ENCODE measurements at regions of chr5 and their contacts with region 1.

Region 1: GRCh38 chr5:140564196-140565023 is at the starts of genes APBB3 and SLC35A4:
- DNase-seq: peak; percentile 97
- H3K4me3 Mint-ChIP-seq: peak within 1 kb of the TSS; percentile 96
- H3K27ac Mint-ChIP-seq: peak within 1 kb of the TSS; percentile 93
- H3K4me1 Mint-ChIP-seq: peaks cover 53% of the 10 kb centered on the region
- H3K27me3 Mint-ChIP-seq: no peaks in the 10 kb centered on the region
- total RNA-seq, gene APBB3: 15.4 to 16.5 TPM
- total RNA-seq, gene SLC35A4: 57.1 to 60.1 TPM

Region 2: DNA sequence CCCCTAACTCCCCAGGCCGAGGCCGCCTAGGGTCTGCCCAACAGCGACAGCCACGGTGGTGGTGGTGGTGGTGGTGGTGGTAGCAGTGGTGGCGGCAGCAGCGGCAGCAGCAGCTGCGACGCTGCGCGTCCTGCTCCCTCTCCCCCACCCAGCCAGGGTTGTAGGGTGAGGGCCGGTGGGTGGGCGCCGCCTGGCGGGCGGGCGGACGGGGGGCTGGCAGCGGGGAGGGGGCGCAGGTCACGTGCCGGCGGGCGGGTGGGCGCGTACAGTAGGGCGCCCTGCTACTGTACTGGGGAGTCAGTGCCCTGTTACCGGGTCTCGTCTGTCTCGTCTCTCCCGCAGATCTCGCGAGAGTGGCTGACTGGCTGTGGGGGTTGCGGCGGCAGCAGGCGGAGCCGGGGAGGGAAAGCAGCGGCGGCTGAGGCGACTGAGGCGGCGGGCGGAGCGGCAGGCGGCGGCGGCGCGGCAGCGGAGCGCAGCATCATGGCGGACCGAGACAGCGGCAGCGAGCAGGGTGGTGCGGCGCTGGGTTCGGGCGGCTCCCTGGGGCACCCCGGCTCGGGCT is 450.6 kb before region 1 on chr5 and contains the start of gene PURA:
- CTCF ChIA-PET with region 1: no interaction called
- intact Hi-C with region 1: loop called (anchors 5 kb)
- DNase-seq: peak; percentile 98
- H3K4me3 Mint-ChIP-seq: peak within 1 kb of the TSS; percentile 91
- H3K27ac Mint-ChIP-seq: peak within 1 kb of the TSS; percentile 90
- H3K4me1 Mint-ChIP-seq: peaks cover 66% of the 10 kb centered on the region
- H3K27me3 Mint-ChIP-seq: no peaks in the 10 kb centered on the region
- total RNA-seq, gene PURA: 9.0 to 10.3 TPM

Region 3: DNA sequence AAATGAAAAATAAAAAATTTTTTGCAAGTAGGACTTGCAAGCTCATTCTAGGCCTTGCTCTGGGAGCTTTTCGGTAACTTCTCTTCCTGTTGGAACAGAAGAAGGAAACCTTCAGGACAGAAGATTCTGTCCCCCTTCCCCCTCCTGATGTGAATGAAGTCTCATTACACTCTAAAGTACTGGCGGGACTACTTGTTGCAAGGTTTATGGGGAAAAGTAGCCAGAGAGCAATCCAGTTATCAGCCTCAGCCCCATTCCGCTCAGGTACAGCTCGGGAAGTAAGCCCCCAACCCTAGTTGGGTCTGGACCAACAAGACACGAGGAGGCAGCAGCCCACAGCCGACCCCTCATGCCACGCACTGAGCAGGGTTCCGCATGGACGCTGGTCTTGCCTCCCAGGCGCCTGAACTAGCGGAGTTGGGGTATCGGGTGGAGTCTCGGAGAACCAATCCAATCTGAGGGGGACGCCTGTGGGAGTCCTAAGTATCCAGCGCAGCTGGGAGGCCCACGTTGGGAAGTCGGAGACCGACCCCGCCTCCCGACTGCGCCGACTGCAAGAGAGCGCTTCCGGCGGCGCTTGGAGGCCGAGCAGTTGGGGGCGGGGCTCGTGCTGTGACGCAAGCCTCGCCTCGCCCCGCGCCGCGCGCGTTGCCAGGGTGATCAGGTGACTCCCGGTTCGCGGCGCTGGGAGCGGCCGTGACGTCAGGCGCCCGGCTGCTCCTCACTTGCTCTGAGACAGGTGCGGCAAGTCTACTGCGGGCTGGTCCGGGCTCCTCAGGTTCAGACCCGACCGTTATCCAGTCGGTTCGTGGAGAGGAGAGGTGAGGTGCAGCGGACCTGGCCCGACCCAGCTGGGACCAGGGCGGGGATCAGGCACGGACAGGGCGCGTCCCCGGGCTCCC is 389.7 kb before region 1 on chr5 and contains the start of gene CYSTM1:
- CTCF ChIA-PET with region 1: no interaction called
- intact Hi-C with region 1: loop called (anchors 5 kb)
- DNase-seq: peak; percentile 97
- H3K4me3 Mint-ChIP-seq: peak within 1 kb of the TSS; percentile 92
- H3K27ac Mint-ChIP-seq: peak within 1 kb of the TSS; percentile 66
- H3K4me1 Mint-ChIP-seq: peaks cover 12% of the 10 kb centered on the region
- H3K27me3 Mint-ChIP-seq: peaks cover 2% of the 10 kb centered on the region
- total RNA-seq, gene CYSTM1: 22.3 to 25.1 TPM

Region 4: DNA sequence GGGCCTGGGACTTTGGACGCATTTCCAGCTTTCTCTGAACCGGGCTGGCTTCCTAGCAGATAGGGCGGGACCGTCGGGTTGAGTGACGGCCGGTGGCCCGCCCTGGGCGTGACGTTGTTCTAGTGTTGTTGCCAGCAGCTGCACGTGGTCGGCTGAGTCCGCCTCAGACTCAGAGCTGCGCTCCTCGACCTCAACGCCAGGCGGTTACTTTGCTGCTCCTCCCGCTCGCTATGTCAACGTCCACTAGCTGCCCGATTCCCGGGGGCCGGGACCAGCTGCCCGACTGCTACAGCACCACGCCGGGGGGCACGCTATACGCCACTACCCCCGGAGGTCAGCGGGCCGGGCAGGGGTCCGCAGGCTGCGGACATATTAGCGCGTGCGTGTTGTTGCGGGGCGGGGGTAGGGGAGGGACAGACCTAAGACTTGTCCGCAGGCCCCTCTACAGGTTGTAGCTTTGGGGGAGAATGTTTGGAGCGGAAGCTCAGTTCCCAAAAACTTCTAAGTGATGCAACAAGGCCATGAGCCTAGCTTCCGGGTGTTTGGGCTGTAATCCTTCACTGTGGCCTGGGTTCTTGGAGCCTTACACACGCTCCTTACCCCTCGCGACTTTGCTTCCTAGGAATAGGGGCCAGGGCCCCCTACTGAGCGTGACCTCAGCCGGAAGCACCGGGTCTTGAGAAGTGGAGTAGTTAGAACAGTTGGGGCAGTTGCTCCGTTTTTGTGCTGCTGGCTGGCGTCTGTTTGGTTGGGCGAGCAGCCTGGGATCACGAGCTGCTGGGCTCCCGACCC is 16.7 kb before region 1 on chr5 and contains the start of gene EIF4EBP3:
- CTCF ChIA-PET with region 1: interaction called, 17 read pairs
- intact Hi-C with region 1: loop called (anchors 1 kb)
- DNase-seq: peak; percentile 93
- H3K4me3 Mint-ChIP-seq: peak within 1 kb of the TSS; percentile 87
- H3K27ac Mint-ChIP-seq: peak within 1 kb of the TSS; percentile 94
- H3K4me1 Mint-ChIP-seq: peaks cover 42% of the 10 kb centered on the region
- H3K27me3 Mint-ChIP-seq: no peaks in the 10 kb centered on the region
- total RNA-seq, gene EIF4EBP3: 27.2 to 28.5 TPM

Region 5: DNA sequence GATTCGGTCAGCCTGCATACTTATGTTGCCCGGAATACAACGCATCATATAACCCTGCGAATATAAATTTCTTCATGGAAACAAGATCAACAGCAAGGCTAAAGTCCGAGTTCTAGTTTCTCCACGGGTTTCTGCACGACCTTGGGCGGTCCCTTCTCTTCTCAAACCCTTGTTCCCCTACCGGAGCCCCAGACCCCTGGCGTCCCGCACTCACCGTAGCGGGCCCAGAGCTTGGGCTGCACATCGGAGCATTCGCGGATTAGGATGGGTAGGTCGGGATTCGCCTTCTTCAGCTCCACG is 82.6 kb after region 1 on chr5:
- CTCF ChIA-PET with region 1: no interaction called
- intact Hi-C with region 1: loop called (anchors 1 kb)
- DNase-seq: no peak
- H3K4me3 Mint-ChIP-seq: peak overlapping the region; percentile 100
- H3K27ac Mint-ChIP-seq: peak overlapping the region; percentile 99
- H3K4me1 Mint-ChIP-seq: peaks cover 40% of the 10 kb centered on the region
- H3K27me3 Mint-ChIP-seq: no peaks in the 10 kb centered on the region

Region 6: DNA sequence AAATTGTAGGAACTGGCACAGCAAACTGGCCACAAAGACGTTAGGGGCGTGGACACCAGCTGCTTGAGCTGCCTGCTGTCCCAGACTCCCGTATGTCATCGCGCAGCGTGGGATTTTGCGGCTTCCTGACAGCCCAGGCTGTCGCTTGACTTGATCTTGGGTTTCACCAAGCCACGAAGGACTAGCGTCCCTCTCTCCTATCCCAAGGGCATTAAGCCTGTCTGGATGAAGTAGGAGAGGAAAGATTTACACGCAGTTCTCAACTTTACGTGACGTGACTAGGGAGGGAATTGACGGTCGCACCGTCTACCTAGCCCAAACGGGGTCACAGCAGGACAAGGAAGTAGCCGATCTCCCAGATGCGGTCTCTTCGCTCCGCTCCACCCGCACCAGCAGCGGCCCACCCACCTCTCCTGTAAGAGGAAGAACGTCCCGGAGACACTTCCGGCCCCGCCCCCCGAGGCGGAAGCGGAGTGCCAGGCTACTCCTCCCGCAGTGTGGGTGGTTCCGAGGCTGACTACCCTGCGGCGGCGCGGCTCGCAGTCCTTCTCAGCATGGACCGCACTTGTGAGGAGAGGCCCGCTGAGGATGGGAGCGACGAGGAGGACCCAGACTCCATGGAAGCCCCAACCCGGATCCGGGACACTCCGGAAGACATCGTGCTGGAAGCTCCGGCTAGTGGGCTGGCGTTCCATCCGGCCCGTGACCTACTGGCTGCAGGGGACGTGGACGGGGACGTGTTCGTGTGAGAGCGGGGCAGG is 100.1 kb after region 1 on chr5 and contains the start of gene WDR55:
- CTCF ChIA-PET with region 1: no interaction called
- intact Hi-C with region 1: loop called (anchors 1 kb)
- DNase-seq: peak; percentile 97
- H3K4me3 Mint-ChIP-seq: peak within 1 kb of the TSS; percentile 97
- H3K27ac Mint-ChIP-seq: peak within 1 kb of the TSS; percentile 91
- H3K4me1 Mint-ChIP-seq: peaks cover 33% of the 10 kb centered on the region
- H3K27me3 Mint-ChIP-seq: no peaks in the 10 kb centered on the region
- total RNA-seq, gene WDR55: 18.9 to 19.8 TPM

Region 7: GRCh38 chr5:140690941-140691924 is 126.8 kb after region 1 on chr5 and contains the starts of genes HARS1 and HARS2:
- CTCF ChIA-PET with region 1: no interaction called
- intact Hi-C with region 1: loop called (anchors 1 kb)
- DNase-seq: peak; percentile 92
- H3K4me3 Mint-ChIP-seq: peak within 1 kb of the TSS; percentile 100
- H3K27ac Mint-ChIP-seq: peak within 1 kb of the TSS; percentile 97
- H3K4me1 Mint-ChIP-seq: peaks cover 35% of the 10 kb centered on the region
- H3K27me3 Mint-ChIP-seq: no peaks in the 10 kb centered on the region
- total RNA-seq, gene HARS1: 69.0 to 74.8 TPM
- total RNA-seq, gene HARS2: 27.4 to 29.3 TPM